Posterior vena cava (tissue), 2 donors: ENCODE measurements at regions of chr11 and their contacts with region 1.

Region 1: DNA sequence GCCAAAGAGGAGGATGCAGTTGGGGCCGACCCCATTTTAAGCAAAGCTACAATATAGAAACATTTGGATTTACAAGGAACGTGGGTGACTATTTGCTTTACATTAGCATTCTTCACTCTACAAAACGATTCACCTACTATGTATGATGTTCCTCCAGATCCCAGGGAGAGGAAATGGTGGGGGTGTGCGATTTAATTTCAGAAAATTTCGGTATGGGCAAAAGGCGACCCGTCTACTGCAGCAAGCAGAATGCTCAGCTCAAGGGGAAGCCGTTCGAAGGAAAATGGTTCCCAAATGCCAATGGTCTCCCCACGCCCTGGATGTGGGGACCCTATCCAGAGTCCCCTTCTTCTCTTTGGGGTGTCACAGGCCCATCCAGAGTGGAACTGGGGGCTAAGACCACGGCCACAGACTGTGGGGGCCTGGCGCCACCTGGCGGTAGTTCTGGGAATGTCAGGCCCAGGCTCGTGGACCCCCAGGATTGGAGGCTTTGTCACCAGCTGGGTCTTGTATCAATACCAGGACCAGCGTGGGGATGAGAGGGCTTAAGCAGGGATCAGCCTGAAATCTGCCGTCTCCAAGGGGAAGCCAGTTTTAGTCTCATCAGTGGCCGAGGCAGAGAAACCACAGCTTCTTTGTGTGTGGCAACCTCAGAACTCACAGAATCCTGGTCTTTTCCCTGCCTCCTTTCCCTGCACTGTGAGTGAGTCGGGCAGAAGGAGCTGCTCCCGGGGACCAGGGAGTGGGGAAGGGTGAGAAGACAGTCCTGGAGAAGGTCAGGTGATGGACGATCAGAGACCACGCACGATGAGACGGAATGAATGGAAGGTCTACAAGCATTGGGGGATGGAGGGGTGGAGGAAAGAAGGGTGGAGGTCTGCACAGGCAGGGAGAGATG is 8.4 kb downstream of the LRRC10B start:
- DNase-seq: no peak

Region 2: DNA sequence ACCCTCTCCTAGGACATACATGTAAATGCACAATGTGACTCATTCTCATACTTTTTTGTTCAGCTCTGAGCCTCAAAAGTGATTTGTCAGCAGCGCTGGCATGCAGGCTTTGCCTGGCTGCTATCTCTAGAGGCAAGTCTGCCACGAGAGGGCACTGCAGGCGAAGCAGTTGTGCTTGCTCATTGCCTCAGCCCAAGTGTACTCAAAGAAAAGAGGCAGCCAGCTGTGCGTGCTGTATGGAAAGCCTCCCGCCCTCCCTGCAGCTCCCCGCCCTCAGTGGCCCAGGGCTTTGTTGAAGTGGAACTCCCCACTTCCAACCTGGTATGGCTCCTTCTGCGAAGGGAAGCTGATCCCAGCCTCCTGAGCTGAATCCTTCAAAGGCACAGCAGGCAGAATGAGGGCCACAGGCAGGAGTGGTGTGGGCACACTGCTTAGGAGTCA is 70.7 kb before region 1 on chr11:
- intact Hi-C with region 1: loop called (anchors 2 to 5 kb)
- DNase-seq: peak; percentile 98

Region 3: DNA sequence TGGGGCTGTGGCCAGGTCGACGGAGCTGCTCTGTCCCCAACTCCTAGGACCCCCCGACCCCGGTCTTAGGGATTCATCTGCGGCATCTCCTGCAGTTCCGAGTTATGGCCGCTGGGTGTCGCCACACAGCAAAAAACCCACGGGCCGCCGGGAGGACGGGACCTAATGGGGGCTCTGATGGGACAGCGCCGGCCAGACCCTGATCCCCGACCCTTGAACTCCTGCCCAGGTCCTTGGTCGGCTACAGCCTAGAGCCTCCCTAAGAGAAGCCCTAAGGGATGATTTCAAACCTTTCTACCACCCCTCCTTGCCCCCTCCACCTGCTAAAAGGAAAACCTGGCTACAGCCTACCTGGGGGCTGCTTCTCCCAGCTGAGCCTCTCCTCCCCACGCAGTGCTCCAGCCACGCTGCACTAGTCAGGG is 39.2 kb before region 1 on chr11:
- intact Hi-C with region 1: loop called in 1 of 2 experiments (anchors 5 kb)
- DNase-seq: peak; percentile 89